Activated naive CD4-positive, alpha-beta T cell treated with anti-CD3 and anti-CD28 coated beads for 36 hours (primary cell): ENCODE measurements at regions of chr11 and their contacts with region 1.

Region 1: DNA sequence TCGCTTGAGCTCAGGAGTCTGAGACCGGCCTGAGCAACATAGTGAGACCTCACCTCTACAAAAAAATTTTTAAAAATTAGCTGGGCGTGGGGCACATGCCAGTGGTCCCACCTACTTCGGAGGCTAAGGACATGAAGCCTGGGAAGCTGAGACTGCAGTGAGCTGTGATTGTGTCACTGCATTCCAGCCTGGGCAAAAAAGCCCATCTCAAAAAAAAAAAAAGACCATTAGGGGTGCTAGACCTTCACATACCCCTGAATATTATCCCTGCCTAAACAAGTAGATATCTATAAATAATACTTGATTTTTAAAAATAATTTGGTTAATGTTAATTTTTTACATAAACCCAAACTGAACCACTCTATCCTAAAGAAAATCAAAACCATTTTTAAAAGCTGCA is 24.2 kb downstream of the NUP98 start:
- DNase-seq: no peak
- H3K4me3 Mint-ChIP-seq: no peak overlapping the region
- H3K27ac Mint-ChIP-seq: no peak overlapping the region
- H3K4me1 Mint-ChIP-seq: no peaks in the 10 kb centered on the region
- H3K27me3 Mint-ChIP-seq: no peaks in the 10 kb centered on the region

Region 2: GRCh38 chr11:3723014-3723708 is 50.0 kb before region 1 on chr11:
- CTCF ChIA-PET with region 1: no interaction called
- intact Hi-C with region 1: loop called (anchors 5 kb)
- DNase-seq: no peak
- H3K4me3 Mint-ChIP-seq: no peak overlapping the region
- H3K27ac Mint-ChIP-seq: no peak overlapping the region
- H3K4me1 Mint-ChIP-seq: no peaks in the 10 kb centered on the region
- H3K27me3 Mint-ChIP-seq: no peaks in the 10 kb centered on the region